ENCODE measurements at regions of chr1 and their contacts with region 1.

Region 1: GRCh38 chr1:110619412-110620249 is 13.5 kb upstream of the KCNA2 start:
- ATAC-seq: peak; percentile 92 to 97 (median 96)
- H3K4me3 ChIP-seq: peak overlapping the region in 2 of 5 donors; percentile 0 to 10
- H3K27ac ChIP-seq: no peak overlapping the region
- H3K4me1 ChIP-seq: peaks cover 0 to 3% of the 10 kb centered on the region in 2 donors

Region 2: GRCh38 chr1:110513511-110513910 is 106.1 kb before region 1 on chr1:
- in situ Hi-C with region 1: loop called in 6 of 9 experiments (anchors 10 to 25 kb)
- ATAC-seq: peak; percentile 82 to 99 (median 98)
- H3K4me3 ChIP-seq: no peak overlapping the region
- H3K27ac ChIP-seq: peak overlapping the region in 1 of 2 donors; percentile 59
- H3K4me1 ChIP-seq: peaks cover 0 to 11% of the 10 kb centered on the region in 2 donors

Region 3: DNA sequence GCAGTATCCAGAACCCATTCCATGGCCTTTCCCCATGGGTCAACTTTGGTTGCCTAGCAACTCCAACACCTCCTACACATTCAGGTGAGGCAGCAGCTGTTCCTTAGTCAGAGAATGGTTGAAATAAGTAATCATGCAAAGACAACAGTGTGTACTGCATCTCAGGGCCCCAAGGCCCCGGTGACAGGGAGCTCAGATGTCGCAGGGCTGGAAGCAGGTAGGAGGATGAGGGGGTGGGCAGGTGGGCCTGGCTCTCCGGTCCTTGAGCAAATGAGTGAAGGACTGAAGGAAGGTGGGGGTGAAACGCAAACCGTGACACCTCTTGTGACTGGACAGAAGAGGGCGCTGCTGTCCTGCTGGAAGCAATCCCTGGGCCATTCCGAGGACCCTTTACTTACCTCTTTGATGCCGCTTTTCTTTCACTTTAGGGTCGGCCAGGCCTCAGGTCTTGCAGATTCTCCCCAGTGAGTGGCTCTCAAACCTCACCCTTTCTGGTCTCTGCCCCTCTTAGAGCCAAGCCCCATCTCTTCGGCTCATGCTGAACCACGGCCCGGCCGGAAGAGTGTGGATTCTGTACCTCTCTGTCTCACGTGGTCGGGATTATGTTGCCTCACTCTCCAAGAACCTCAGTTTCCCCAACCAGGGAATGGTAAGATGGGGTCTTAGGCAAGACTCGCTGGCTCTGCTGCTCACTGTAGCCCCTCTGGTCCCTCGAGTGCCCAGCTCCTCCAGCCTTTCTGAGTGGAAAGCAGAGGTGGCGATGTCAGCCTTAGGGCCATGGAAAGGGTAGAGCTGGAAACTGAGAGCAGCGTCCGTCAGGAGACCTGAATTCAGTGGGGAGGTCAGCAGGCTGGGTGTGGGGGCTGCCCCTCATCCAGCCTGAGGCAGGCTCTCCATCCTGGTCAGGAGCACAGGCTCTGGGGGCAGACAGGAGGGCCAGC is 95.0 kb before region 1 on chr1:
- in situ Hi-C with region 1: loop called in 7 of 9 experiments (anchors 10 to 25 kb)
- ATAC-seq: peak; percentile 62 to 97 (median 88)
- H3K4me3 ChIP-seq: no peak overlapping the region
- H3K27ac ChIP-seq: no peak overlapping the region
- H3K4me1 ChIP-seq: peaks cover 0 to 5% of the 10 kb centered on the region in 2 donors

Region 4: DNA sequence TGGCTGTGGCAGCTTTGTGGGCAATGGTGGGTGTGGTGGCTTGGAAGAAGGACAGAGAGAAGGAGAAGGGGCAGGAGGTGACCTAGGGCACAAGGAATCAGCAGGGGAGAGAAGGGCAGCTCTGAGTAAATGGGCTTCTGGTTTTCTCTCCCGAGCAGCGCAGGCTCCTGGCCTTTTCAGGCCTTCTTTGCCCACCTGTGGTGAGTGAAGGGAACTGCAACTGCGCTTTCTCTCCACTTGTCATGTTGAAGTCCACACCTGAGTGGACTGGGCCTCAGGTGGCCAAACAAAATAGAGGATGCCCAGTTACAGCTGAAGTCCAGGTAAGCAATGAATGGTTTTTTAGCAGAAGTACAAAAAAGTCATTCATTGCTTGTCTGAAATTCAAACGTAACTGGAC is 71.2 kb before region 1 on chr1:
- in situ Hi-C with region 1: loop called in 2 of 9 experiments (anchors 10 kb)
- ATAC-seq: peak; percentile 25 to 75 (median 47)
- H3K4me3 ChIP-seq: no peak overlapping the region
- H3K27ac ChIP-seq: no peak overlapping the region
- H3K4me1 ChIP-seq: no peaks in the 10 kb centered on the region

Region 5: DNA sequence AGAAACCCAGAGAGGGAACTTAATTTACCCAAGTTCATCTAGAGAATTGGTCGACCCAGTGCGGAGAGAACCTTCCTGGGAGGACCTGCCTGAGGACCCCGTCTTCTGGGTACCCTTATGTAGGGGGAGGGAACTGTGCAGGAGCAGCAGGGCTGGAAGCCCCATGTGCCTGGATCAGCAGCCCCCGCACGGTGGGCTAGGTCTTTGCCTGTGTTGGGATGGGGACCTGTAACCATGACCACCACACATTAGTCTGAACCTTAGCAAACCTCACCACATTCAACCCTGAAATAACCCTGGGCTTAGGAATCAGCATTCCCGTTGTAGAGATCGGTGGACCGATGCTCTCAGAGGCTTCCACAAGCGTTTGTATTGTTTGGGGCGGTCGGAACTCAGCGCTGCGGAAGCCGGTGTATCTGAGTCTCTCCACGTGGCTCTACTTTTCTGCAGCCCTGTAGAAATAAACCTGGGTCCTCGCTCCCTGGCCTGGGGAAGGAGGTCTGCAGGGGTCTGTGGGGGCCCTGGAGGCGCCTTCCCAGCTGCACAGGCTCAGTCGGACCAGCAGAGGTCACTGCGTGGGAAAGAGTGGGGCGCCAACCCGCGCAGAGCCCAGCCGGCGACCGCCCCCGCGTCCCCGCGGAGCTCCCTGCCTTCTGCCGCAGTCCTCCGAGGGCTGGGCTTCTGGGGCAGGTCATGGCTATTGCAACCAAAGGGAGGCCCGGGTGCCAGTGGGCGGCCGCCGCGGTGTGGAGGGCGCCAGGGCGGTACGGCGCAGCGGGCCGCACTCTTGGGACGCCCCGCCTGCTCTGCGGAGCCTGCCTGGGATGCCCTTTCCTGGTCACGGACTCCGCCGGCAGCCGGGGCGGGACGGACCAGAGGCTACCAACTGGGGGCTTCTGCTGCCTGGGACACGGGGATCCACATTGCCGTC is 64.5 kb before region 1 on chr1:
- in situ Hi-C with region 1: loop called in 1 of 9 experiments (anchors 10 kb)
- ATAC-seq: peak; percentile 85 to 94 (median 90)
- H3K4me3 ChIP-seq: peak overlapping the region; percentile 11 to 28 (median 22)
- H3K27ac ChIP-seq: no peak overlapping the region
- H3K4me1 ChIP-seq: no peaks in the 10 kb centered on the region

Region 6: GRCh38 chr1:110749960-110750359 is 130.3 kb after region 1 on chr1:
- in situ Hi-C with region 1: no loop called
- ATAC-seq: peak in 3 of 8 experiments; percentile 24 to 48 (median 38)
- H3K4me3 ChIP-seq: no peak overlapping the region
- H3K27ac ChIP-seq: no peak overlapping the region
- H3K4me1 ChIP-seq: peaks cover 4 to 5% of the 10 kb centered on the region in 2 donors

Region 7: DNA sequence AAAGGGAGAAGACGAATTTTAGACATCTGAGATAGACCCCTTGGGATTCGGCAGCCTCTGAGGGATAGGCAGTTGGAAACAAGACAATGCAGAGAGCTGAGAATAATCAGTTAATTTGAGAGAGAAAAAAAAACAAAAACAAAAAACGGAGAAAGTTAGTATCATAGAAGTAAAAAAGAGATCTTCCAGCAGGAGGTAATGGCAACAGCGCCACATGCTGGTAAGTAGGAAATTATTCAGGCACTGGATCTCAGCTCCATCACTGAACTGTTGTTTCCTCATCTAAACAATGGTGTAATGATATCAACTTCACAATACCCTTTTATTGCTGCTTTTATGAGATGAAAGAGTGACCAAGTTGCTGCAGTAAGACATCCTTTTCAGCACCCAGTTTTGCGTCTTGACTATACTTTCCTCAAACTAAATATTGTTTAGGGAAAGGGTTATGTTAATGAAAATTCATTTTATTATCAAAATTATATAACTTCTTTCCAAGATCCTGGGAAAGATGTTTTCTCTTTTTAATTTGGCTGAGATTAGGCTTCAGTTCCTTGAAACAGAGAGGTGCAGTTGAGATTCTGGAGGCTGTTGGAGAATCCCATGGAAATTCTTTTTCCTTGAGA is 146.5 kb after region 1 on chr1:
- in situ Hi-C with region 1: loop called in 2 of 9 experiments (anchors 10 kb)
- ATAC-seq: peak in 5 of 8 experiments; percentile 39 to 84 (median 65)
- H3K4me3 ChIP-seq: no peak overlapping the region
- H3K27ac ChIP-seq: no peak overlapping the region
- H3K4me1 ChIP-seq: no peaks in the 10 kb centered on the region

Region 8: DNA sequence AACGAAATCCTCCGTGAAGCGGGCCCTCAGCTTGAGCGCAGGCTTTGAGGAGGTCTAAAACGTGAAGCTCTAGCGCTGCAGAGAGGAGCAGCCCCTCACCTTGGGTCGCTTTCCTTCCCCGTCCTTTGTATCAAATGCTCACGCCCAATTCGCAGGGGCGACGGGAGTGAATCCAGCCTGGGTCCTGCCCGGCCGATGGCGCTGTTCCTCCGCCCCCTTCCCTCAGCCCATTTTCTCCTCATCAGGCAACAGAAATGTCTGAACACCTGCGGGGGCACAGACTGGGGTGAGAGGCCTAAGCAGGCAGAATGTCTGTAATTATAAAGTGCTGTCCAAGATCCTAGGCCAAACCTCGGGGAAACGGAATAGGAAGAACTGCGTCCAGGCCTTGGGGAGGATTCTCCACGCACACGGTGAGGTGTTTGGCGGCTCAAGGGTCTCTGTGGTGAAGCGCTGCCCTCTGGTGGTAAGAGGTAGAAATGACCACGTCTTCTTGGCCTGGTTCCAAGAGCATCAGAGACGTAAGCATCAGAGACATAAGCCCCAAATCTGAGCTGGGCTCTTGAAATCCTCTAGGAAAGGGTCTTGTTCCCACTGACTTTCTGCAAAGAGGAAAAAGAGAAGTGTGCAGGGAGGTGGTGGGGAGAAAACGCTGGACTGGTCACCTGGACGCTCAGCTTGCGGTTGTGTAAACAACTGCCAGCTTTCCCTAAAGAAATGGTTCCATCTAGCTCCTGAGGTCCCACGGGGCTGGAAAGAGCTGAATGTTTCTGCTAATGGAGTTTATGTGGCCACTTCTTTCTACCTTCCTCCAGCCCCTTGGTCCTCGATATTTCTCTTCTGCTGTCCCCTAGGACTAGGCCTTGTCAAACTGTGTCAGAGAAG is 161.2 kb after region 1 on chr1:
- in situ Hi-C with region 1: loop called in 4 of 9 experiments (anchors 5 to 10 kb)
- ATAC-seq: peak; percentile 56 to 87 (median 81)
- H3K4me3 ChIP-seq: no peak overlapping the region
- H3K27ac ChIP-seq: no peak overlapping the region
- H3K4me1 ChIP-seq: no peaks in the 10 kb centered on the region